Activated B cell treated with CpG ODN at 0.5 μM for 24 hours (primary cell): ENCODE measurements at regions of chr6 and their contacts with region 1.

Region 1: DNA sequence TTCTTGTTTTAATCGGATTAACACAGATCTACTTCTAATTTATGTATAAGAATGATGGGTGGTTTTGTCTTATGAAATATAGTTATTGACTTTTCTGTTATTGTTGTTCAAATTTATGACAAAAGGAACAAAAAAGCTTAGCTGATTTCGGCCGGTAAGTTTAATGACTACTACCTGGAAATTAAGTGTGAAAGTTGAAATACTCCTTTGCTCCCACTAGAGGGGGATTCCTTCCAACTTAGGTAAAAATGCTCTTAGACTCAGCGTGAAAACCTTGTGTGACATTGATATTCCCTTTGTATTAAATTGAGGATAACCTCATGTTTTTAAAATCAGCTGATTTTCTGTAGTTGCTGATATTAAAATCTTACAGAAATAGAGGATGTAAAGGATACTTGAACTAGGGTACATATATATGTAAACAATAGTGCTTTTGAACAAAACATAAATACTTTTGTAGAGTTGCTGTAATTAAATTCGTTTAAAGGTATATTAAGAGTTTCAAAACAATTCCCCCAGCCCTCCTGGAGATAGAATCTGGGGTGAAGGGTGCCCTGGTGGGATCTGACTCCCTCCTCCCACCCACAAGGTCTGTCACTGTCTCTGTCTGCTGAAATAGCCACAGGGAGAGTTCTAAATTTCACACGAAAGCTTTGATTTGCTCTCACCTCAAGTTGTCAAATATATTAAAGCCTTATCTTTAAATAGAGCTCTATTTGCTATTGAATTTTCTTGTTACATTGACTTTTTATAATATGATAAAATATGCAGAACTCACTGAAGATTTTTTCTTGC is 257.5 kb downstream of the ARID1B start:
- DNase-seq: no peak
- ATAC-seq: peak; percentile 64
- H3K4me3 Mint-ChIP-seq: peak overlapping the region; percentile 61
- H3K27ac Mint-ChIP-seq: peak overlapping the region; percentile 63
- H3K4me1 Mint-ChIP-seq: peaks cover 39% of the 10 kb centered on the region
- H3K27me3 Mint-ChIP-seq: no peaks in the 10 kb centered on the region
- CTCF ChIP-seq: no peak

Region 2: DNA sequence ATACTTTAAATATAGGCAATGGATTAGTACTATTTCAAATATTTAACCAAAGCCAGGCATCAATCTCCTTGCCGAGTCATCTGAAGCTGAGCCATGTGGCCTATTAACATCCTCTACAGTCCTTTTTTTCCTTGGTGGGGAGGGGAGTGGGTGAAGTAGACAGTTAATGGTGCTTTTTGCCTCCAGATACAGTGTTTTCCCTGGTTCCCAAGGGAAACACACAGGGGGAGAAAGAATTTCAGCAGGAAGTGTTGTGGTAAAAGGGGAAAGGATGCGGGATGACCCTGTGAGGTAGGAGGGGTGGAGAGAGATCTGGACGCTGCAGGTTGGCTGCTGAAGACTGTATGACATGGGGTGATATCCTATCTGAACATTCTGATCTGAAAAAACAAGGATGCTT is 1761.2 kb before region 1 on chr6:
- CTCF ChIA-PET with region 1: no interaction called
- POLR2A ChIA-PET with region 1: no interaction called
- intact Hi-C with region 1: no loop called
- DNase-seq: no peak
- ATAC-seq: no peak
- H3K4me3 Mint-ChIP-seq: no peak overlapping the region
- H3K27ac Mint-ChIP-seq: no peak overlapping the region
- H3K4me1 Mint-ChIP-seq: no peaks in the 10 kb centered on the region
- H3K27me3 Mint-ChIP-seq: no peaks in the 10 kb centered on the region
- CTCF ChIP-seq: no peak

Region 3: DNA sequence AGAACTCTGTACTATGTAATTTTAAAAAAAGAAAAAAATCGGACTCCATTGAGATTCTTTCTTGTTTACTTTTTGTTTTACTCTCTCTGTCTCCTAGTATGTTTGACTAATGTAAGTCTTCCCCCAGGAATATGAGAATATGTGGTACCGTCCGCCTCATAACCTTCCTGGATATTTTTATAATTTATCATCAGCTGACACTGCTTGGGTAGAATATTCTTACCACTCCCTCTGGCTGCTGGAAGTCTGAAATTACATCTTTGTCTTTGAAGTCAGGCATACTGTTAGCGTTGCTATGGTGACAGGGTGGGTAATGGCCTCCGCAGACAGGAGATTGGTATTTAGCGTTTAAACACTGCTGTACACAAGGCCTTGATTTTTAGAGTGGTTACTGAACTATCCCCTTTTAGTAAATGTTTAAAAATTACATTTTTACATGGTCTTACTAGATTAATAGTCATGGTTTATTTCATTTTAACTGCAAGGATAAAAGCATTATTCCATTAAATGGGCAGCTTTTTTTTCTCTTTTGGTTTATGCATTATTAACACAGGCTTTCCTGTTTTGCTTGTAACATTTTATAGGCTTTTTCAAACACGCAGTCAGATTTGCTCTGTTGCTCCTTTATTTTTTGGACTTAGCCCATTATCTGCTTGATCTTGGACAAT is 81.0 kb before region 1 on chr6:
- CTCF ChIA-PET with region 1: no interaction called
- POLR2A ChIA-PET with region 1: no interaction called
- intact Hi-C with region 1: no loop called
- DNase-seq: no peak
- ATAC-seq: peak; percentile 57
- H3K4me3 Mint-ChIP-seq: peak overlapping the region; percentile 44
- H3K27ac Mint-ChIP-seq: peak overlapping the region; percentile 65
- H3K4me1 Mint-ChIP-seq: peaks cover 75% of the 10 kb centered on the region
- H3K27me3 Mint-ChIP-seq: no peaks in the 10 kb centered on the region
- CTCF ChIP-seq: no peak

Region 4: DNA sequence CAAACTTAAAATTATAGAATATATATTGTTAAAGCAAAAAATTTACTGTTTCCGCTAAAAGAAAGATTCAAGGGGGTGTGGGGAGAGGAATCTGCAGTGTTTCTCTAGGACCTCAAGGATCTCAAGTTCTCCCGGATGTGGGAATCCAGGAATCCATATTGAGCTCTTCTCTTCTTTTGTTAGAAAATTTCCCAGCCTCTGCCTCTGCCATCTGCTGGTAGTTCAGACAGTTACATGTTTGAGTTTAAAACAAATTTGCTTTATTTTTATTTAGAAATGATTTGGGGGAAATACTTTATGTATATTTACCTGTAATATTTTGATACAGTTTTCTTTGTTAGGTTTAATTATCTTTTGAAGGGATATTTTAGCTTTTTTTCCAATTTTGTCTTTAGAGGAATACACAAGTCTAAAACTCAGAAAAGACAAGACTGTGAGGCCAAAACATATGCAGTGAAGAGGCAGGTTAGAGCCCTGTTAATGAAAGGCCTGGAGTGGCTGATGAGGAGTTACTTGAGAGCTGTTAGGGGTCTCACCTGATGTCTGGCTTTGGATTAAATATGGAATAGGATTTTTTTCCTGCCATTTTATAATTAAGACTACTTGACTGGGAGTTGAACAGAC is 11.3 kb after region 1 on chr6:
- CTCF ChIA-PET with region 1: interaction called, 8 read pairs
- POLR2A ChIA-PET with region 1: interaction called, 4 read pairs
- intact Hi-C with region 1: loop called (anchors 2 kb)
- DNase-seq: no peak
- ATAC-seq: no peak
- H3K4me3 Mint-ChIP-seq: no peak overlapping the region
- H3K27ac Mint-ChIP-seq: no peak overlapping the region
- H3K4me1 Mint-ChIP-seq: peaks cover 32% of the 10 kb centered on the region
- H3K27me3 Mint-ChIP-seq: no peaks in the 10 kb centered on the region
- CTCF ChIP-seq: no peak

Region 5: DNA sequence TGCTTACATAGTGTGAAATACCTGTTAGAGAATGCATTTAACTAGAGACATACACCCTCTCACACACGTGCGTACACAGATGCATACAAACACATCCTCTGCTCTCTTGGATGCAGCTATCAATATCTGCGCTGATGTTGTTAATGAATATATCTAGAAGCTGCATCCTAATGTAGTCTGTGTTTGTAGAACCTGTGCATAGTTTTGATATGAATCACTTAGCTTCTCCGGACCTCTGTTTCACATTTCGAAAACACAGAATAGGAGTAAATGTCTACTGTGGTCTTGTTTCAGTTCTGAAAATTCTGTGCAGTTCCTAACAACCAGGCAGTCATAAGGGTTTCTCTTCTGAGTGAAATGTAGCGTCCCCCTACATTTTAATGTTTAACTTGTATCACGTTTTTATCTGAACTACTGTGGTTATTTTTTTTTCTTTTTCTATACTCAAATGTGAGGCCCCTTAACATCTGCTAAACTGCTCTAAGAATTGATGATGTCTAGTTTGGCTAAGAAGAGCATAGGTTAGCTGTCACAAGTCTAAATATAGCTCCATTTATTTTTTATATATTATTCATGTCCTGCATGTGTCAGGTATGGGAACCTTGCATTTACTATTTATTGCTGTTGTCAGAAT is 34.2 kb after region 1 on chr6:
- CTCF ChIA-PET with region 1: interaction called, 3 read pairs
- POLR2A ChIA-PET with region 1: no interaction called
- intact Hi-C with region 1: loop called (anchors 2 kb)
- DNase-seq: no peak
- ATAC-seq: peak; percentile 89
- H3K4me3 Mint-ChIP-seq: peak overlapping the region; percentile 29
- H3K27ac Mint-ChIP-seq: peak overlapping the region; percentile 64
- H3K4me1 Mint-ChIP-seq: peaks cover 78% of the 10 kb centered on the region
- H3K27me3 Mint-ChIP-seq: no peaks in the 10 kb centered on the region
- CTCF ChIP-seq: no peak

Region 6: DNA sequence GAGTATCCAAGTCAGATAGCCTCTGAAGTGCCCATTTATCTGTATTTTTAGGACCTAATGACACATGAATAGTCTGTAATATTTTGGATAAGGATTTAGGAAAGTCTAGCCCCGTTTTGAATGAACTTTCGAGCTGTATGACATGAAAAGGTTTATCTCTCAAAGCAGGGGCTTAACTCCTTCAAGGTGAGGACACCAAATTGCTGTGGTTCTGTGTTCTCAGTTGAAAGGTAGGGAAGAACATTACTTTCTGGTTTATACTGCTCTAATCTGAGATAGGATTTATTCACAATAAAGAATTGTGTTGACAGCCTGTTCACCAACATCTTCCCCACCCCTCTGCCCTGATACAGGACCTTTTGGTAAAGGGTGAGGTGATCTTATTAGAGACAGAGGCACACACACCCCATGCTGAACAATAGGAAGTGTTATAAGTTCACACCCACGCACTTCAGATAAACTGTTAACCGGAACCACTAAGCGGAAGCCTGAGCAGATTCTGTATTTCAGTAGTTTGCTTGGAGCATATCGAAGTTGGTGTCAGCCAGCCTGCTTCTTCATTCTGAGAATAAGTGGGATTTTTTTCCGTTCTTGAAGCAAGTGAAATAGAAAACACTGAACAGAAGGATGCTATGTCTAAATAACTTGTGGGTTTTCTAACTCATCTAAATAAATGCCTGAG is 65.4 kb after region 1 on chr6:
- CTCF ChIA-PET with region 1: interaction called, 6 read pairs
- POLR2A ChIA-PET with region 1: no interaction called
- intact Hi-C with region 1: loop called (anchors 1 kb)
- DNase-seq: no peak
- ATAC-seq: peak; percentile 94
- H3K4me3 Mint-ChIP-seq: peak overlapping the region; percentile 44
- H3K27ac Mint-ChIP-seq: peak overlapping the region; percentile 78
- H3K4me1 Mint-ChIP-seq: peaks cover 60% of the 10 kb centered on the region
- H3K27me3 Mint-ChIP-seq: no peaks in the 10 kb centered on the region
- CTCF ChIP-seq: no peak

Region 7: DNA sequence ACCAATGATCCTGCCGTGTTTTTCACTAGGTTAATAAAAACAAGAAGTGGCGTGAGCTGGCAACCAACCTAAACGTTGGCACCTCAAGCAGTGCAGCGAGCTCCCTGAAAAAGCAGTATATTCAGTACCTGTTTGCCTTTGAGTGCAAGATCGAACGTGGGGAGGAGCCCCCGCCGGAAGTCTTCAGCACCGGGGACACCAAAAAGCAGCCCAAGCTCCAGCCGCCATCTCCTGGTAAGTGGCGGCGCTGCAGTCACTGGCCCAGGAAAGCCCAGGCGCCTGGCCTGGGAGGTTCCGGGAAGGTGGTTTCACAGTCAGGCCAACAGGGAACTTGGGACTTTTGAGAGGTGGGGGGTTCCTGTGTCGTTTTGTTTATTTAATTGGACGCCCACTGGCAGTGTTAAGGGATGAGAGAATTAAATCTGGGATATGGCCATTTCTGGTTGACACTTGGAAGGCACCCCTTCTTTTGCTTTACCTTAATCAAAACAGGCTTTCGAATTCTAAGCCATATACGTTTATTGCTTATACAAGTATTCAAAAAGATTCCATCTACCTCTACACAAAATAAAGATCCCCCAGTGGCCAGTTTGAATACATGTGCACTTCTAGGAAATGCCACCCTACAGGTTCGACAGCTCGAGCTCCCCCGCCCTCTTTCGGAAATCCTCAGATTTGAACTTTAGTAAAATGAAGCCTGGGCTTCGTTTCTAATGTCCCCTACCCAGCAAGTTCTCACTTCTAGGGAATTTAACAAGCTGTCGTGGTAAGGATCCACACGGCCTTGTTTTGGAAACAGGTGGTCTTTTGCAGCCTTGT is 149.8 kb after region 1 on chr6:
- CTCF ChIA-PET with region 1: interaction called, 3 read pairs
- POLR2A ChIA-PET with region 1: no interaction called
- intact Hi-C with region 1: loop called (anchors 1 kb)
- DNase-seq: peak; percentile 30
- ATAC-seq: peak; percentile 75
- H3K4me3 Mint-ChIP-seq: no peak overlapping the region
- H3K27ac Mint-ChIP-seq: no peak overlapping the region
- H3K4me1 Mint-ChIP-seq: peaks cover 3% of the 10 kb centered on the region
- H3K27me3 Mint-ChIP-seq: no peaks in the 10 kb centered on the region
- CTCF ChIP-seq: no peak

Region 8: GRCh38 chr6:157274471-157275226 is 240.0 kb after region 1 on chr6:
- CTCF ChIA-PET with region 1: no interaction called
- POLR2A ChIA-PET with region 1: no interaction called
- intact Hi-C with region 1: loop called (anchors 1 kb)
- DNase-seq: peak; percentile 93
- ATAC-seq: peak; percentile 79
- H3K4me3 Mint-ChIP-seq: peak overlapping the region; percentile 94
- H3K27ac Mint-ChIP-seq: peak overlapping the region; percentile 96
- H3K4me1 Mint-ChIP-seq: peaks cover 9% of the 10 kb centered on the region
- H3K27me3 Mint-ChIP-seq: no peaks in the 10 kb centered on the region
- CTCF ChIP-seq: no peak